ENCODE measurements at regions of chr2 and their contacts with region 1.

Region 1: DNA sequence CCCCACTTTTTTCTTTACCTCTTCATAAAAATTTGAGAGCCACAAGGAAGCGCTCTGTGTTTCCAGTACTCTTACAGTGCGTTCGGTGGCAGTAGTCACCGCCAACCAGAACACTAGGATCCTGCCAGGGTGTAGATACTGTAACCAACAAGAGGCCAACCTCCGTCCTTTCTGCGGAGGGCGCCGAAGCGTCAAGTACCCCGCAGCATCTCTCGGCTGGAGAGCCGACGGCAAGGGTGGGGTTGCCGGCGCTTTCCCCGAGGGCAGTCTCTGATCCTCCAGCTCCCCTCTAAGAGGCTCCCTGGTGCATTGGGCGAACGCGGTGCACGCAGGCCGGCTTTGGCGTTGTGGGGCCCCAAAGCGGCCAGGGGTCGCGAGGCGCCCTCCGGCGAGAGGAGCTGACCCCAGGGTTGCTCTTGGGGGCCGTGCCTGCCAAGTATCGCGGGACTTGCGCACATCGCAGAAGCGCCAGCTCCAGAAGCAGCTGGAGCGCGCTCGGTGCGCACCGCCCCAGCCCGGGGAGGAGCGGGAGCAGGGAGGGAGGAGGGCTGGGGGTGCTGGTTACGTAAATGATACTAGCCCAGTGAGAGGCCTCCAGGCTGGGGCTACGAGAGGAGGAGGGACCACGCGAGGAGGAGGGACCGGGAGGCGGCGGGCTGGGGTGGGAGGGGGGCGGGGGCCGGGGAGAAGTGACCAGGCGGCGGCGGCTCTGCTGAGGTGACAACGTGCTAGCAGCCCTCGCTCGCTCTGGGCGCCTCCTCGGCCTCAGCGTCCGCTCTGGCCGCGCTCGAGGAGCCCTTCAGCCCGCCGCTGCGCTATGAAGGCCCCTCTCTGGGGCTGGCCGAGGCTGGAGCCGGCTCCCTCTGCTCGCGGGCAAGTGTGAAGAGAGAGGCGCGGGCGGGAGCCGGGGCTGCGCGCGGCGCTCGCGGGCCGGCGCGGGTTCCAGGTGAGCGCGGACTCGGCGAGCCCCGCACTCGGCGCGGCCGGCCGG is at the start of gene GALNT13:
- DNase-seq: peak; percentile 89 to 94
- H3K4me3 ChIP-seq: peak within 1 kb of the TSS; percentile 66 to 85 (median 78)
- H3K27ac ChIP-seq: peak within 1 kb of the TSS; percentile 29; the same call in 1 of the 2 replicates
- H3K4me1 ChIP-seq: peaks cover 0 to 5% (median 1%) of the 10 kb centered on the region in 4 experiments; a peak in 2 of 7 replicates
- H3K27me3 ChIP-seq: peaks cover 2 to 27% (median 21%) of the 10 kb centered on the region in 4 experiments
- CTCF ChIP-seq: no peak
- EP300 ChIP-seq: no peak
- POLR2A ChIP-seq: peak in 1 of 2 experiments; percentile 63; a peak in 2 of 3 replicates
- RAD21 ChIP-seq: peak; percentile 29 to 34; a peak in 3 of 4 replicates
- total RNA-seq, gene GALNT13: 9.6 and 10.4 TPM in 2 replicates

Region 2: DNA sequence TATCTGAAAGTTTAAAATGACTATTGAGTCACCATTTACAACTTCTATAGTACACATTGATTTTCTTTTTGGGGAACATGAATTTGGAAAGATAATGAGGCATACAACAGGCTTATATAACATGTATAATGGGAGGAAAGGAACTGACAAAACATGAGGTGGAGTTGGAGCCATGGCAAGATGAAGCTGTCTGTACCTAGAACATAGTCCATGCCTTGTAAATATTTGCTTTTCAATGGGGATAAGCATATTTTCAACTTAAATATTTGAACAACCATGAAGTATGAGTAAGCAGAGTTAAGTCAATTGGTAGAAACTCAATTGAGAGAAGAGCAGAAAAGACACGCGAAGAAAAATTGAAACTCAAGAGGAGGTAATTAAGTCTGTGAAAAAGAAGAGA is 36.9 kb before region 1 on chr2:
- CTCF ChIA-PET with region 1: no interaction called
- POLR2A ChIA-PET with region 1: no interaction called
- DNase-seq: no peak
- H3K4me3 ChIP-seq: no peak overlapping the region
- H3K27ac ChIP-seq: no peak overlapping the region
- H3K4me1 ChIP-seq: no peaks in the 10 kb centered on the region
- H3K27me3 ChIP-seq: no peaks in the 10 kb centered on the region
- CTCF ChIP-seq: no peak
- EP300 ChIP-seq: no peak
- POLR2A ChIP-seq: no peak
- RAD21 ChIP-seq: no peak

Region 3: GRCh38 chr2:153890576-153890975 is 19.1 kb after region 1 on chr2:
- CTCF ChIA-PET with region 1: interaction called, 4 read pairs
- POLR2A ChIA-PET with region 1: interaction called, 11 read pairs
- DNase-seq: peak in 1 of 2 experiments; percentile 48
- H3K4me3 ChIP-seq: no peak overlapping the region
- H3K27ac ChIP-seq: no peak overlapping the region
- H3K4me1 ChIP-seq: peaks cover 0 to 8% (median 3%) of the 10 kb centered on the region in 4 experiments; a peak in 3 of 7 replicates
- H3K27me3 ChIP-seq: peaks cover 0 to 1% (median 0%) of the 10 kb centered on the region in 4 experiments; a peak in 1 of 7 replicates
- CTCF ChIP-seq: no peak
- EP300 ChIP-seq: no peak
- POLR2A ChIP-seq: no peak
- RAD21 ChIP-seq: peak in 1 of 2 experiments; percentile 21; a peak in 1 of 4 replicates

Region 4: DNA sequence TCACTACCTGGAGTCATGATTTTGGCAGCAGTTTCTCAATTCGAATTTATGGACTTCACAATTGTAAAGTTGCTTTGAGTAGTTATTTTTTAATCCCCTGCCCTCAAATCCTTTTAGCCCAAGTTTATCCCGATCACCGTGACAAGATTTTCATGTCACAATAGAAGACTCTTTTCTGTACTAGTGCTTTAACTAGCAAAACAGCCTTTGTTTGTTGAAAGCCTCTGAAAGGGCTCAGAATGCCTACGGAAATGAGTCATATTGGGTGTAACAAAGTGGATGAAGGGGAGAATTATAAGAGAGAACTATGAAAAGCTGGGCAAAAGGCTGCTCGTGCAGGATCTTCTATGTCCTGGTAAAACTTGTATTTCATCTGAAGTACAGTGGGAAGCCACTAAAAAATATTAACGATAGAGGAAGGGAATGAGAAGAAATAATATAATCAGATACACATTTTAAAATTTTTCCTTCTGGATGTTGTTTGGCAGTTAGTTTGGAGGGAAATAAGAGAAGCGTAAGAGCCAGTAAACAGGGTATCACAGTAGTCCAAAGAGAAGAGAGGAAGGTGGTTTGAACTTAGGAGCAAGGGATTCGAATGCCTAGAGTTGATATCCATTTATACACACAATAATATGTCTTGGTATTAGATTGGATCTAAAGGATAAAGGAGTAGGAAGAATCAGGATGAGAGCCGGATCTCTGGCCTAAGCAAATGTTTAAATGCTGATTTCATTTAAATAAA is 115.1 kb after region 1 on chr2:
- CTCF ChIA-PET with region 1: no interaction called
- POLR2A ChIA-PET with region 1: no interaction called
- DNase-seq: no peak
- H3K4me3 ChIP-seq: no peak overlapping the region
- H3K27ac ChIP-seq: no peak overlapping the region
- H3K4me1 ChIP-seq: peaks cover 0 to 2% (median 0%) of the 10 kb centered on the region in 4 experiments; a peak in 1 of 7 replicates
- H3K27me3 ChIP-seq: no peaks in the 10 kb centered on the region
- CTCF ChIP-seq: no peak
- EP300 ChIP-seq: no peak
- POLR2A ChIP-seq: no peak
- RAD21 ChIP-seq: no peak

Region 5: DNA sequence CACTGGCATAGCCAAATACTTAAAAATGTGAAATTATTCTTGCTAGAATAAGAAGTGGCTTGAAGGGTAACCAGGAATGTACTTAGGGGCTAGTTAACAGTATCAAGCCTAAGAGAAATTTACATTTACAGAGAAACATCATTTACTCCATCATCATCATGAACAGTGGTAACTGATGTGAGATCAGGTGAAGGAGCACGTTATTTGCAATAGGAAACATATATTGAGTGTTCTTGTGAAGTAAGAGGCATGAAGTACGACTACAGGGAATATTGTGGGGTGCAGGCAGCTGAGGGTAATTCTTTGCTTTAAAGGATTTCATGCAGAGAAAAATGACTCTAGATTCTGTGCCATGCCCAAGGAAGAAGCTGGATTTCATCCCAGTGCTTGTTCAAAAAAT is 221.0 kb after region 1 on chr2:
- CTCF ChIA-PET with region 1: no interaction called
- POLR2A ChIA-PET with region 1: no interaction called
- DNase-seq: no peak
- H3K4me3 ChIP-seq: no peak overlapping the region
- H3K27ac ChIP-seq: no peak overlapping the region
- H3K4me1 ChIP-seq: peaks cover 0 to 4% (median 0%) of the 10 kb centered on the region in 4 experiments; a peak in 1 of 7 replicates
- H3K27me3 ChIP-seq: no peaks in the 10 kb centered on the region
- CTCF ChIP-seq: no peak
- EP300 ChIP-seq: no peak
- POLR2A ChIP-seq: no peak
- RAD21 ChIP-seq: no peak